PC-9 (cell line): ENCODE measurements at regions of chr1 and their contacts with region 1.

Region 1: GRCh38 chr1:26529655-26530409 is at the start of gene RPS6KA1:
- DNase-seq: peak in 1 of 2 experiments; percentile 73
- H3K4me3 ChIP-seq: peak within 1 kb of the TSS; percentile 80
- H3K27ac ChIP-seq: peak within 1 kb of the TSS; percentile 65
- H3K4me1 ChIP-seq: peaks cover 18% of the 10 kb centered on the region
- H3K27me3 ChIP-seq: no peaks in the 10 kb centered on the region
- CTCF ChIP-seq: no peak
- total RNA-seq, gene RPS6KA1: 60.5 and 68.5 TPM in 2 replicates

Region 2: DNA sequence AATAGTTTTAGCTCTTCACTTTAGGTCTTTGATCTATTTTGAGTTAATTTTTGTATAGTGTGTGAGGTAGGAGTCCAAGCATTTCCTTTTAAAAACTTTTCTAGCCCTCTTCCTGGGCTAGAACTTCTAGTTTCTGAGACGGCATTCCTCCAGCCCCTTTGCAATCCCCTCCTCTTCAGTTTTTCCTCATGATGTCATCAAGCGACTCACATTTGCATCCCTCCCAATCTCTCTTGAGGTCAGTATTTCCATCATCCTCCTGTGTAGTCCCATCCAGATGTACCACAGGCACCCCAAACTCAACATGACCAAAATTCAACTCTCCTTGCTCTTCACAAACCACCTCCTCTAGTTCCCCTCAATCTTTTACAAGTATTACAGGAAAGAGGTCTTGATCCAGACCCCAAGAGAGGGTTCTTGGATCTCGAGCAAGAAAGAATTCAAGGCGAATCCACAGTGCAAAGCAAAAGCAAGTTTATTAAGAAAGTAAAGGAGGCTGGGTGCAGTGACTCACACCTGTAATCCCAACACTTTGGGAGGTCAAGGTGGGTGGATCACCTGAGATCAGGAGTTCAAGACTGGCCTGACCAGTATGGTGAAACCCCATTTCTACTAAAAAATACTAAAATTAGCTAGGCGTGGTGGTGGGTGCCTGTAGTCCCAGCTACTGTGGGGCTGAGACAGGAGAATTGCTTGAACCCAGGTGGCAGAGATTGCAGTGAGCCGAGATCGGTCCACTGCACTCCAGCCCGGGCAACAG is 46.7 kb before region 1 on chr1:
- CTCF ChIA-PET with region 1: no interaction called
- POLR2A ChIA-PET with region 1: no interaction called
- intact Hi-C with region 1: no loop called
- DNase-seq: no peak
- H3K4me3 ChIP-seq: no peak overlapping the region
- H3K27ac ChIP-seq: no peak overlapping the region
- H3K4me1 ChIP-seq: peaks cover 17% of the 10 kb centered on the region
- H3K27me3 ChIP-seq: no peaks in the 10 kb centered on the region
- CTCF ChIP-seq: no peak

Region 3: GRCh38 chr1:26516987-26517765 is 12.7 kb before region 1 on chr1:
- CTCF ChIA-PET with region 1: interaction called, 10 read pairs
- POLR2A ChIA-PET with region 1: no interaction called
- intact Hi-C with region 1: no loop called
- DNase-seq: no peak
- H3K4me3 ChIP-seq: no peak overlapping the region
- H3K27ac ChIP-seq: no peak overlapping the region
- H3K4me1 ChIP-seq: no peaks in the 10 kb centered on the region
- H3K27me3 ChIP-seq: no peaks in the 10 kb centered on the region
- CTCF ChIP-seq: no peak